Activated CD8-positive, alpha-beta memory T cell treated with anti-CD3 and anti-CD28 coated beads, Interleukin-2, amount 10 ng/mL, durations not matched to agents 7 days and 5 days (primary cell): ENCODE measurements at regions of chr2 and their contacts with region 1.

Region 1: DNA sequence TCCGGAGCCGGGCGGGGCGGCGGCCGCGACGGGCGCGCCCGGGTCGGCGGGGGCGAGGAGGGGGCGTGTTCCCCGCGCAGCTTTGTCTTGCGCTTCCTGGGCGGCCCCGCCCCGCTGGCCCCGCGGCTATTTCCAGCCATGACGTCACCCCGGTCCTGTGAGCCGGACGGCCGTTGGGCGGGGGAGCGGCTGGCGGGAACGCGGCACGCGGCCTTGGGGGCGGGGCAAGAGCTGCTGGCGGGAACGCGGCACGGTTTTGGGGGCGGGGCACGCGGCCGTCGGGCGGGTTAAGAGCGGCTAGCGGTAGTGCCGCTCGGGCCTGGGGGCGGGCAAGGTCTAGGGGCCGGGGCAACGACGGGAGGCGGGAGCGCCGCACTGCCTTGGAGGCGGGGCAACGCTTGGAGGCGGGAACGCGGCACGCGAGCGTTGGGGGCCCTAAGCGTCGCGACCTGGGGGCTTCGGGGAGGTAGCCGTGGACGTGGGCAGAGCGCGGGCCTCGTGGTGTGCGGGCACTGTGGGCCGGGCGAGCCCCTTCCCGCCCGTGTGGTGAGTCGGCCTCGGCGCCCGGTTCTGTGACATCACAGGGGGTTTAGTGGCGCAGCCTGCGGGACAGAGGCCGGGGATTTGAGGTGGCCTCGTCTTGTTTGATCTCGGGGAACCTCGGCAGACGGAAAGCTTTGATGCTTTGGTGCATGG is 704 bp downstream of the KLF11 start:
- DNase-seq: peak; percentile 96
- ATAC-seq: peak; percentile 73
- H3K4me3 Mint-ChIP-seq: peak overlapping the region; percentile 68
- H3K27ac Mint-ChIP-seq: peak overlapping the region; percentile 79
- H3K4me1 Mint-ChIP-seq: peaks cover 13% of the 10 kb centered on the region
- H3K27me3 Mint-ChIP-seq: peaks cover 21% of the 10 kb centered on the region

Region 2: GRCh38 chr2:9843229-9844035 is 200.6 kb before region 1 on chr2 and contains the start of gene TAF1B:
- CTCF ChIA-PET with region 1: interaction called, 10 read pairs
- DNase-seq: peak; percentile 94
- ATAC-seq: peak; percentile 89
- H3K4me3 Mint-ChIP-seq: peak within 1 kb of the TSS; percentile 91
- H3K27ac Mint-ChIP-seq: peak within 1 kb of the TSS; percentile 86
- H3K4me1 Mint-ChIP-seq: peaks cover 43% of the 10 kb centered on the region
- H3K27me3 Mint-ChIP-seq: peaks cover 2% of the 10 kb centered on the region
- total RNA-seq, gene TAF1B: 29.5 to 31.2 TPM

Region 3: DNA sequence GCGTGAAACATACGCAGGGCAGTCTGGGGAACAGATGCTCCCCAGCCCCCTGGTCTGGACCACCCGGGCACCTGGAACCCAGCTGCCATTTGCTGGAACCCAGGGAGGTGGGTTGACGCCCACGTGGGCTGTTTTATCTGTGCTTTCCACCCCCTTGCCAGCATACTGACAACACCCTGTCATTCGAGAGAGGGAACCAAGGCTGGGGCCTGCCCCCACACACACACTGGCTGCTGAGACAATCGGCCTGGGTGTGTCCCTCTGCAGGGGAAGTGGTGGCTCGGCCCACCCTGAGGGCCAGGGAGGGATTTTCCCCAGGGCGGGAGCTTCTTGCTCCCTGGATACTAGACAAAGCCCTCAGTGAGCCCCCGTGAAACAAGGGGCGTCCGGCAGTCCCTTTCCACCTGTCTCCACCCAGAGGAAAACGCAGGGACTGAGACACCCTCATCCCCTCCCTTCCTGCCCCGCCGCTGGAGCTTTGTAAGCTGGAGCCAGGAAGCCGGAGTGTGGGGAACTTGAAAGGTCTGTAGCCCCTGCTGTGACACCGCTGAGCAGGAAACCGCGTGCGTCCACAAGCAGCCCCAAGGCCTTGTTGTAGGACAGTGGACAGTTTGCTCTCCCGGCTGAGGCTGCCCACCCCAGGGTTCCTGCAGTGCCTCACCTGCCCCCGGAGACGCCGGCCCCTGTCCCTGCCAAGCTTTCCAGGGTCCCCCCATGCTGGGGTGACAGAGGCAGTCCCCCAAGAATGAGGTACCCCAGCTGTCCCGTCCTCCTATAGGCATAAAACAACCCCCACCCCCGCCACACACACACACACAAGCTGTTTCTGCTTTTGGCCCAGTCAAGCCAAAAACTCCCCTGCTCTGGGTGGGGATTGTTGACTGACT is 14.8 kb before region 1 on chr2:
- CTCF ChIA-PET with region 1: interaction called, 14 read pairs
- DNase-seq: peak; percentile 83
- ATAC-seq: peak; percentile 93
- H3K4me3 Mint-ChIP-seq: peak overlapping the region; percentile 53
- H3K27ac Mint-ChIP-seq: peak overlapping the region; percentile 84
- H3K4me1 Mint-ChIP-seq: peaks cover 22% of the 10 kb centered on the region
- H3K27me3 Mint-ChIP-seq: no peaks in the 10 kb centered on the region

Region 4: DNA sequence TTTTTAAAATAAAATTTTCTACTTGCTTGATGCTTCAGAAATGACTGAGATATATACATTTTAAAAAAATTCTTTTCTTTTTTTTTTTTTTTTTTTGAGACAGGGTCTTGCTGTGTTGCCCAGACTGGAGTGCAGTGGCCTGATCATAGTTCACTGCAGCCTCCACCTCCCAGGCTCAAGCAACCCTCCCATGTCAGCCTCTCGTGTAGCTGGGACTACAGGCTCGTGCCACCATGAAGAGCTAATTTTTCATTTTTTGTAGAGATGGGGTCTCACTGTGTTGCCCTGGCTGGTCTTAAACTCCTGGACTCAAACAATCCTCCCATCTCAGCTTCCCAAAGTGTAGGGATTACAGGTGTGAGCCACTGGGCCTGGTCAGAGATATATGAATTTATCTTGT is 23.3 kb after region 1 on chr2:
- CTCF ChIA-PET with region 1: interaction called, 15 read pairs
- DNase-seq: no peak
- ATAC-seq: no peak
- H3K4me3 Mint-ChIP-seq: no peak overlapping the region
- H3K27ac Mint-ChIP-seq: no peak overlapping the region
- H3K4me1 Mint-ChIP-seq: no peaks in the 10 kb centered on the region
- H3K27me3 Mint-ChIP-seq: peaks cover 13% of the 10 kb centered on the region

Region 5: GRCh38 chr2:10400568-10400977 is 356.5 kb after region 1 on chr2:
- CTCF ChIA-PET with region 1: no interaction called
- DNase-seq: peak; percentile 72
- ATAC-seq: peak; percentile 46
- H3K4me3 Mint-ChIP-seq: no peak overlapping the region
- H3K27ac Mint-ChIP-seq: peak overlapping the region; percentile 65
- H3K4me1 Mint-ChIP-seq: peaks cover 20% of the 10 kb centered on the region
- H3K27me3 Mint-ChIP-seq: no peaks in the 10 kb centered on the region